OCI-LY7 (cell line): ENCODE measurements at regions of chrX and their contacts with region 1.

Region 1: GRCh38 chrX:131841496-131842410 is 181.3 kb upstream of the STK26 start:
- DNase-seq: peak; percentile 52
- H3K4me3 ChIP-seq: no peak overlapping the region
- H3K27ac ChIP-seq: no peak overlapping the region
- H3K4me1 ChIP-seq: no peaks in the 10 kb centered on the region
- CTCF ChIP-seq: peak; percentile 75

Region 2: DNA sequence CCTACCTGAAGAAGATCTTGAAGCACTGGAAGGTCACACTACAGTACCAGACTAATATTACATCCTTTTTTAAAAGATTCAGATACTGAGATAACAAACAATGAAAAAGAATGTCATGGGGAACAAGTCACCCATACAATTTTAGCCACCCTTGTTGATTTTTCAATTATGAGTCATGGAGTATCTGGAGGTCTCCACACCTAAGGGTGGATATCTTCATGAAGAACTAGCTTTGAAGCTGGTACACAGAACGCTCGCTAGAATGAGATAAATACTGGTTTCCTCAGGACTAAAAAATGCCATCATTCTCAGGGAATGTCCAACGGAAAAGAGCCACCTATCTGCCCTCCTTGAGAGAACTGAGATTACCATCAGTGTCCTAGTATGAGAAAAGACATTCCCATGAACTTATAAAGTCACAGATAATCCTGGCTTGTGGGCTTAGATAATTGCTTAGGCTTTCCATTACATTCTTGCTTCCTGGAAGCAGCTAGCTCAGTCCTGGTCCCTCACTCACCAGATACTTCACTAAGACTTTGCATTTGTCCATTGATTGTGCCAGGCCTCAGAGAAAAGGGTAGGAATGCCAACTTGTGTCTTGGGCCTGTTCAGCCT is 131.2 kb before region 1 on chrX:
- CTCF ChIA-PET with region 1: no interaction called
- POLR2A ChIA-PET with region 1: no interaction called
- intact Hi-C with region 1: no loop called
- DNase-seq: no peak
- H3K4me3 ChIP-seq: no peak overlapping the region
- H3K27ac ChIP-seq: no peak overlapping the region
- H3K4me1 ChIP-seq: no peaks in the 10 kb centered on the region
- CTCF ChIP-seq: no peak

Region 3: GRCh38 chrX:131792789-131793462 is 48.8 kb before region 1 on chrX:
- CTCF ChIA-PET with region 1: no interaction called
- POLR2A ChIA-PET with region 1: no interaction called
- intact Hi-C with region 1: no loop called
- DNase-seq: peak; percentile 14
- H3K4me3 ChIP-seq: no peak overlapping the region
- H3K27ac ChIP-seq: no peak overlapping the region
- H3K4me1 ChIP-seq: no peaks in the 10 kb centered on the region
- CTCF ChIP-seq: no peak

Region 4: DNA sequence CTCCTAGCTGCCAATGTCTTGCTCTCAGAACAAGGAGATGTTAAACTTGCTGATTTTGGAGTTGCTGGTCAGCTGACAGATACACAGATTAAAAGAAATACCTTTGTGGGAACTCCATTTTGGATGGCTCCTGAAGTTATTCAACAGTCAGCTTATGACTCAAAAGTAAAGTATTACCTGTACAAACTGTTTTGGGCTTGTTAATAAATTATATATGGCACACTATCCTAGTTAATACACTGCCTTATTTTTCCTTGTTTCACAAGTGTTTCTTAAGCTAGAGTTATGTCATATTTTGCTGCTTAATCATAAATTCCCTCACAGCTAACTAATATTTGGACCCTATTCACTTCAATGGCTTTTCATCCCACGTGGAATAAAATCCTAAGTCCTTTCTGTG is 226.7 kb after region 1 on chrX:
- CTCF ChIA-PET with region 1: no interaction called
- POLR2A ChIA-PET with region 1: no interaction called
- intact Hi-C with region 1: loop called (anchors 5 kb)
- DNase-seq: no peak
- H3K4me3 ChIP-seq: no peak overlapping the region
- H3K27ac ChIP-seq: no peak overlapping the region
- H3K4me1 ChIP-seq: no peaks in the 10 kb centered on the region
- CTCF ChIP-seq: no peak

Region 5: GRCh38 chrX:132704769-132705168 is 863.0 kb after region 1 on chrX:
- CTCF ChIA-PET with region 1: no interaction called
- POLR2A ChIA-PET with region 1: no interaction called
- intact Hi-C with region 1: no loop called
- DNase-seq: no peak
- H3K4me3 ChIP-seq: no peak overlapping the region
- H3K27ac ChIP-seq: no peak overlapping the region
- H3K4me1 ChIP-seq: no peaks in the 10 kb centered on the region
- CTCF ChIP-seq: no peak